ENCODE measurements at regions of chr3 and their contacts with region 1.

Region 1: GRCh38 chr3:127598841-127599570 is 795 bp downstream of the MCM2 start:
- H3K4me3 Mint-ChIP-seq: peak overlapping the region; percentile 85
- H3K27ac Mint-ChIP-seq: peak overlapping the region; percentile 84
- H3K4me1 Mint-ChIP-seq: peaks cover 17% of the 10 kb centered on the region
- H3K27me3 Mint-ChIP-seq: no peaks in the 10 kb centered on the region

Region 2: DNA sequence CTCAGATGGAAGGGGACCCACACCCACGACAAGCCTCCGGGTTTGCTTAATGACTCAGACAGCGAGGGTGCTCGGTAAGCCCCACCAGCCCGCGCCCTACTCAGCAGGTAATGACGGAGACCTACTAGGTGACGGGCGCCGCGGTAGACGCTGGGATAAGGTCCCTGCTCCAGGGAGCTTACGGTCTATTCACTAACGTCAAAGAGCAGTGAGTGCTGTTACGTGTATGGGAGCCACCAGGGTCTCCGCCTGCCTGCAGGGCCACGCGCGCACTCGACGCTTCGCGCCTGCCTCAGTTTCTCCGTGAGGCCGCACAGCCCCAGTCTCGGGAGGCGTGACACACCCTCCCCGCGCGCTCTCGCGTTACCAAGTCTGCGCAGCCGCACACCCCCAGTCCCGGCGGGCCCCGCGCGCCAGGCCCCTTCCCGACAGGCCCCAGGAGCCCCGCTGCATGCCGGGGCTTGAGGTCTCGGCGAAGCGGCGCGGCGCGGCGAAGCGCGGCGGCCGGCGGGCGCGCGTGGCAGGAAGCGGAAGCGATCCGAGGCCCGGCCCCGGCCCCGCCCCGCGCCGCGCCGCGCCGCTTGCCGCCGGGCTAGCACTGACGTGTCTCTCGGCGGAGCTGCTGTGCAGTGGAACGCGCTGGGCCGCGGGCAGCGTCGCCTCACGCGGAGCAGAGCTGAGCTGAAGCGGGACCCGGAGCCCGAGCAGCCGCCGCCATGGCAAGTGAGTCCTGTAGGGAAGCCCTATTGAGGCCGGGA is 453.0 kb after region 1 on chr3 and contains the start of gene SEC61A1:
- intact Hi-C with region 1: loop called (anchors 5 kb)
- H3K4me3 Mint-ChIP-seq: peak within 1 kb of the TSS; percentile 82
- H3K27ac Mint-ChIP-seq: peak within 1 kb of the TSS; percentile 86
- H3K4me1 Mint-ChIP-seq: peaks cover 39% of the 10 kb centered on the region
- H3K27me3 Mint-ChIP-seq: peaks cover 4% of the 10 kb centered on the region